ENCODE measurements at regions of chr9 and their contacts with region 1.

Region 1: GRCh38 chr9:128361986-128362646 is 9.1 kb upstream of the URM1 start:
- DNase-seq: peak; percentile 75
- H3K4me3 Mint-ChIP-seq: peak overlapping the region; percentile 74
- H3K27ac Mint-ChIP-seq: no peak overlapping the region
- H3K4me1 Mint-ChIP-seq: peaks cover 11% of the 10 kb centered on the region
- H3K27me3 Mint-ChIP-seq: no peaks in the 10 kb centered on the region

Region 2: GRCh38 chr9:128296337-128297220 is 65.5 kb before region 1 on chr9:
- CTCF ChIA-PET with region 1: interaction called, 20 read pairs
- POLR2A ChIA-PET with region 1: no interaction called
- DNase-seq: no peak
- H3K4me3 Mint-ChIP-seq: no peak overlapping the region
- H3K27ac Mint-ChIP-seq: no peak overlapping the region
- H3K4me1 Mint-ChIP-seq: peaks cover 1% of the 10 kb centered on the region
- H3K27me3 Mint-ChIP-seq: no peaks in the 10 kb centered on the region

Region 3: GRCh38 chr9:128341435-128341849 is 20.7 kb before region 1 on chr9:
- CTCF ChIA-PET with region 1: interaction called, 13 read pairs
- POLR2A ChIA-PET with region 1: interaction called, 3 read pairs
- DNase-seq: peak; percentile 78
- H3K4me3 Mint-ChIP-seq: peak overlapping the region; percentile 99
- H3K27ac Mint-ChIP-seq: peak overlapping the region; percentile 87
- H3K4me1 Mint-ChIP-seq: peaks cover 10% of the 10 kb centered on the region
- H3K27me3 Mint-ChIP-seq: no peaks in the 10 kb centered on the region

Region 4: GRCh38 chr9:128349125-128349524 is 13.0 kb before region 1 on chr9:
- CTCF ChIA-PET with region 1: interaction called, 12 read pairs
- POLR2A ChIA-PET with region 1: no interaction called
- DNase-seq: no peak
- H3K4me3 Mint-ChIP-seq: no peak overlapping the region
- H3K27ac Mint-ChIP-seq: no peak overlapping the region
- H3K4me1 Mint-ChIP-seq: no peaks in the 10 kb centered on the region
- H3K27me3 Mint-ChIP-seq: no peaks in the 10 kb centered on the region

Region 5: GRCh38 chr9:128412120-128412790 is 50.1 kb after region 1 on chr9:
- CTCF ChIA-PET with region 1: interaction called, 16 read pairs
- POLR2A ChIA-PET with region 1: interaction called, 4 read pairs
- DNase-seq: peak; percentile 66
- H3K4me3 Mint-ChIP-seq: no peak overlapping the region
- H3K27ac Mint-ChIP-seq: no peak overlapping the region
- H3K4me1 Mint-ChIP-seq: peaks cover 2% of the 10 kb centered on the region
- H3K27me3 Mint-ChIP-seq: peaks cover 47% of the 10 kb centered on the region

Region 6: GRCh38 chr9:128420060-128420650 is 58.0 kb after region 1 on chr9:
- CTCF ChIA-PET with region 1: interaction called, 14 read pairs
- POLR2A ChIA-PET with region 1: no interaction called
- DNase-seq: peak; percentile 71
- H3K4me3 Mint-ChIP-seq: peak overlapping the region; percentile 59
- H3K27ac Mint-ChIP-seq: no peak overlapping the region
- H3K4me1 Mint-ChIP-seq: peaks cover 23% of the 10 kb centered on the region
- H3K27me3 Mint-ChIP-seq: peaks cover 40% of the 10 kb centered on the region

Region 7: GRCh38 chr9:128523199-128523925 is 161.2 kb after region 1 on chr9:
- CTCF ChIA-PET with region 1: no interaction called
- POLR2A ChIA-PET with region 1: no interaction called
- DNase-seq: no peak
- H3K4me3 Mint-ChIP-seq: no peak overlapping the region
- H3K27ac Mint-ChIP-seq: no peak overlapping the region
- H3K4me1 Mint-ChIP-seq: peaks cover 2% of the 10 kb centered on the region
- H3K27me3 Mint-ChIP-seq: no peaks in the 10 kb centered on the region